WTC11 (cell line): ENCODE measurements at regions of chr5 and their contacts with region 1.

Region 1: DNA sequence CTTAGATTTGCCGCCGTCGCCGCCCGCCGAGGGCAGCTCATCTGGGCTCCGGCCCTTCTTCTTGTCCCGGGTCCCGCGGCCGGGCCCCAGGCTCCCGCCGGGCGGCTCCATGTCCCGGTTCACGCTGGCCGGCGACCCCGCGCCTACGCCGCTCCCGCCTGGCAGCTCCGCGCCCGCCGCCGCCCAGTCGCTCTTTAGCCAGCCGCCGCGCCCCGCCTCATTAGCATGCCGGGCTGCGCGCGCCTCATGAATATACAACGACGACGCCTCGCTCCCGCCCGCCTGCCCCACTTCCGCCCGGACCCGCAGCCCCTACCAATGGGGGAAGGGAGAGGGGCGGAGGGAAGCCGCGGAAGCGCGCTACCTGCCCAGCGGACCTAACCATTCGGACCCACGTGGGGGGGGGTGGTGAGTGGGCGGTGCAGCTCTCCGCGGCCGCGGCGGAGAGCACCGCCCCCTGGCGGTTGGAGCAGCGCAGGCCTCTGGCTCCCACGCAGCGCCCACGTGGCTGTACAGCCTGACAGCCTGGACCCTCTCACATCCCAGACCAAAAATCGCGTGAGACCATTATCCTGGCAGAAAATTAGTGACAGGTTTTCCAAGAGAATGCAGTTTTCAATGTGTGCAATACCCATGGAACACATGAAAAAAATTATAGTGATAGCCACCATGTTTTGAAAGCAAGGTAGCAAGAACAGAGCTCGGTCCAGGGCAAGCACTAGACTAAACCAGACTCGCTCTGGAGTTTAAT is at the start of gene DIAPH1:
- DNase-seq: peak; percentile 97
- ATAC-seq: peak; percentile 94
- H3K4me3 Mint-ChIP-seq: peak within 1 kb of the TSS; percentile 95
- H3K27ac Mint-ChIP-seq: peak within 1 kb of the TSS; percentile 97
- H3K4me1 Mint-ChIP-seq: peaks cover 41% of the 10 kb centered on the region
- H3K27me3 Mint-ChIP-seq: no peaks in the 10 kb centered on the region; the same call in 1 of the 2 replicates
- CTCF ChIP-seq: peak; percentile 93
- total RNA-seq, gene DIAPH1: 90.9 to 109 TPM (median 96.0 TPM) in 3 replicates

Region 2: GRCh38 chr5:141199359-141200235 is 419.4 kb before region 1 on chr5 and contains the start of gene PCDHB11:
- CTCF ChIA-PET with region 1: no interaction called
- POLR2A ChIA-PET with region 1: no interaction called
- DNase-seq: no peak
- ATAC-seq: peak; percentile 67
- H3K4me3 Mint-ChIP-seq: peak within 1 kb of the TSS; percentile 24
- H3K27ac Mint-ChIP-seq: no peak within 1 kb of the TSS
- H3K4me1 Mint-ChIP-seq: peaks cover 7% of the 10 kb centered on the region
- H3K27me3 Mint-ChIP-seq: no peaks in the 10 kb centered on the region; the same call in 1 of the 2 replicates
- CTCF ChIP-seq: peak; percentile 32; the same call in 1 of the 2 replicates
- total RNA-seq, gene PCDHB11: 0.61 to 1.2 TPM (median 0.92 TPM) in 3 replicates

Region 3: DNA sequence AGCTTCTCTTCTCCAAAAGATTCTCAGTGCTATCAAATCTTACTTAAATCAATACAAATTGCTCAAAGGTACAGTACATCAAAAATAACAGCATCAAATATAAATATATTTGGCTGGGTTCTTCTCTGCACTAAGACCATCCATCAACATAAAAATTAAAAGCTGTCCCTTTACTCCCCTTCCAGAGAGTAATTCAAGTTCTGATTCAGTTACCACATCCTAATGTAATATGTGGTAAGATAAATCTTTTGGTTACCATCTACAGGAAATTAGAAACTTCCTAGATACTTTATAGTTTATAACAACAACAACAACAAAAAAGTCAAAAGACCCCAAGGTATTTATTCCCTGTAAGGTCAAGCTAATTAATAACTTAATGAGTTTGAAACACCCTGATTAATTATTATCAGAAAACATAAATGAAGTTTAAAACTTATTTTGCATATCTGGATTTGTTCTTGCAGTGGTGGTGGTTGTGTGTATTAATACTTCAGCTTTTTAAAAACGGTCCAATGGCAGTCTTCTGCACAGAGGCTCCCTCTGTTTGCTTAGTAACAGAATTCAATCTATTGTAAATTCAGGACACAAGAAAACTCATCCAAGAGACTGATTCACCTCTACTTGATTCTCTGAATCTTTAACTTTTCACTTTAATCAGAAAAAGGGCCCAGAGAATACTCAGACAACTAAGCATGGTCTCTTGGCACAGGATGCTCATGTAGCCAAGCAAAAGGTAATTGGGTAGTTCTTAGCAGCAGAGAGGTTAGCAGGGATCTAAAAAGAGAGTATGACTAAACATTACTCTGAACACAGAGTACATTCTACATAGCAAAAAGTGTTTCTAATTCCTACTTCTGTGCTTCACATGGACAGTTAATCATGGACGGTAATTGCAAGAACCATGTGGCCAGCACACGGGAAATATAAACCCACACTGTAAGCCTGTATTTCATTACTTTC is 20.3 kb before region 1 on chr5:
- CTCF ChIA-PET with region 1: interaction called, 141 read pairs
- POLR2A ChIA-PET with region 1: interaction called, 3 read pairs
- DNase-seq: no peak
- ATAC-seq: no peak
- H3K4me3 Mint-ChIP-seq: no peak overlapping the region
- H3K27ac Mint-ChIP-seq: no peak overlapping the region
- H3K4me1 Mint-ChIP-seq: no peaks in the 10 kb centered on the region
- H3K27me3 Mint-ChIP-seq: no peaks in the 10 kb centered on the region
- CTCF ChIP-seq: no peak

Region 4: GRCh38 chr5:141636413-141637122 is 17.6 kb after region 1 on chr5 and contains the starts of genes HDAC3 and RELL2:
- CTCF ChIA-PET with region 1: interaction called, 106 read pairs
- POLR2A ChIA-PET with region 1: interaction called, 36 read pairs
- DNase-seq: peak; percentile 97
- ATAC-seq: peak; percentile 82
- H3K4me3 Mint-ChIP-seq: peak within 1 kb of the TSS; percentile 90
- H3K27ac Mint-ChIP-seq: peak within 1 kb of the TSS; percentile 90
- H3K4me1 Mint-ChIP-seq: peaks cover 22% of the 10 kb centered on the region
- H3K27me3 Mint-ChIP-seq: no peaks in the 10 kb centered on the region
- CTCF ChIP-seq: no peak
- total RNA-seq, gene HDAC3: 84.7 to 96.2 TPM (median 94.5 TPM) in 3 replicates
- total RNA-seq, gene RELL2: 19.3 to 23.8 TPM (median 21.4 TPM) in 3 replicates

Region 5: DNA sequence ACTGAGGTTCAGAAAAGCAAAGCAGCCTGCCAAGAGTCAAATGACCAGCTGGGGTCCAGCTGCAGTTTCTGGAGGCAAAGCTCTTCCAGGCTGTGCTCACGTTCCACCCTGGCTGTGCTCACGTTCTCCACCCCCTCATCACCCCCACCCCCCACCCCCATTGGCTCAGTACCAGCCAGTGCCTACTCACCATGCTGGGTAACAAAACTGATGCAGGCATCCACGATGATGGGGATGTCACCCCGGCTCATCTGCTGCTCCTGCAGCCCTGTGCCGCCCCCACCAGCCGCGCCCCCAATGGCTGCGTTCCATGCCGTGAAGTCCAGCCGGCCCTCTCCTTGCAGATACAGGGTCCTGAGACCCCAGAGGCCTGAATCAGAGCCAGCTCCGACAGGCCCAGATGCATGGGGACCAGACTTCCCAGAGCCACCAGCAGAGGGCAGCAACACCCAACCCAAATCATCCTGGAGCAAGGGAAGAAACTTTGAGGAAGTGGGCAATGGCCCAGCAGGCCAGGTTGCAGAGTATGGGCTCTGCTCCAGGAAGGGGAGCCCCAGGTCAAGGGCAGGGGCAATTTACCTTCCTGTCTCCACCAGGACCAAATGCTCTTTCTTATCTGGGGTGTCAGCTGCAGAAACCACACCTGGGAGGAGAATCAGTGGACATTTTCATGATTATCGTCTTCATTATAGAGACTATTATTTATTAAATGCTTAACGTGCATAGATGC is 45.9 kb after region 1 on chr5:
- CTCF ChIA-PET with region 1: interaction called, 11 read pairs
- POLR2A ChIA-PET with region 1: interaction called, 3 read pairs
- DNase-seq: peak; percentile 88
- ATAC-seq: peak; percentile 95
- H3K4me3 Mint-ChIP-seq: no peak overlapping the region
- H3K27ac Mint-ChIP-seq: no peak overlapping the region
- H3K4me1 Mint-ChIP-seq: peaks cover 11% of the 10 kb centered on the region
- H3K27me3 Mint-ChIP-seq: no peaks in the 10 kb centered on the region
- CTCF ChIP-seq: peak; percentile 92

Region 6: DNA sequence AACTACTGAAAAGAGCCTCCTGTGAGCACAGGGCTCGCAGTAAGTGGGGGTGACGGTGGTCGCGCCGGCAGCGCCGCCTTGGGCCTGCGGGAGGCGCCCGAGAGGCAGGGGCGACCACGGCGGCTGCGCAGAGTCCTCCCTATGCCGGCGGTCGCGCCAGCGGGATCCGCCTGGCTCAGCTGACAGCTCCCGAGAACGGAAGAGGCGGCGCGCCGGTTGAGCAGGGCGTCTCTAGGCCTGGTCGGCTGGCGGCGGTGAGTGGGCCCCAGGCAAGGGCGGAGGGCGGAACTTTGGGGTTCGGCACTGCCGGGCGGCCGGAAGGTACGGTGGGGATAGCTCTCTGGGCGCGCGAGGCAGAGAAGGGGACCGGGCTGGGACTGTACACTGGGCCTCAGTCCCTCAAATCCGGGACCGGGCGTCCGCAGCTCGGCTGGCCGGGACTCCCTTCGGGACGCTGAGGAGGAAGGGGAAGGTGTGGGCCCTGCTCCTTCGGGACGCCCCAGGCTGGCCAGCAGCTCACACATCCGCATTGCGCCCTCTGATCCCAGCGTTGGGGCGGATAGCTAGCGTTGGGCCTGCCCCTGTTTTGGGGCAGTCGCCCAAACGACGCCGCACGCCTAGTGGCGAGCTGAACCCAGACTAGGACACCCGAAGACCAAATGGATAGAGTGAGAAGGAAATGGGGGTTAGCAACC is 350.1 kb after region 1 on chr5 and contains the start of gene RNF14:
- CTCF ChIA-PET with region 1: interaction called, 11 read pairs
- POLR2A ChIA-PET with region 1: no interaction called
- DNase-seq: peak; percentile 95
- ATAC-seq: peak; percentile 96
- H3K4me3 Mint-ChIP-seq: peak within 1 kb of the TSS; percentile 80
- H3K27ac Mint-ChIP-seq: peak within 1 kb of the TSS; percentile 92
- H3K4me1 Mint-ChIP-seq: peaks cover 19% of the 10 kb centered on the region
- H3K27me3 Mint-ChIP-seq: no peaks in the 10 kb centered on the region
- CTCF ChIP-seq: peak; percentile 98
- total RNA-seq, gene RNF14: 17.0 to 22.6 TPM (median 20.5 TPM) in 3 replicates